A549 (cell line): ENCODE measurements at regions of chr15 and their contacts with region 1.

Region 1: DNA sequence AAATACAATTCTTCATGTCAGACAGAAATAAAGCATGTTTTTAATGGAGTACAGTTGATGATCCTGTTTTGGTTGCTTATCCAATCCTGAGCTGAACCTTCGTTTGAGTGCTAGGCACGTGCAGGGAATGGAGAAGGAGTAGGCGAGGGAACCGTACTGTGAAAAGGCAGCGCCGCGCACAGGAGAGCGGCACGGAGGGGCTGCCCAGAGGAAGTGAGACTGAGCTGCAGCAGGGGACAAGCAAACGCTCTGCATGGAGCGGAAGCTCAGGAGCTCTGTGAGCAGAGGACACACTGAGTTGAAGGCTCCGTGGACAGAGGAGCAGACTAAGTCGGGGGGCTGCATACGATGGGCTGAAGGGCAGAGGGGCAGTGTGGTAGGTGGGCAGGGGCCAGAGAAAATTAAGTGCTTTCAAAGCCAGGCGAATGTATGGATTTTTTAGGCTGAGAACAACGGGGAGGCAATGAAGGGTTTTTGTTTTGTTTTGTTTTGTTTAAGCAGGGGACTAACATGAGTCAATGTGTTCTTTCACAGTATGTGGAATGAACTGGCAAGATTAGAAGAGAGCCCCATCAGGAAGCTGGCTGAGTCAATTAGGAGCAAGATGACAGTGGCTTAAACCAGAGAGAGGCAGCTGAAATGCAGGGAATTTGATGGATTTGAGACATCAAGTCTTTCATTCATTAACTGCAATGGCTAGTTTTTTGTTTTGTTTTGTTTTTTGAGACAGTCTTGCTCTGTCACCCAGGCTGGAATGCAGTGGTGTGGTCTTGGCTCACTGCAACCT is 23.8 kb upstream of the TM2D3 start:
- DNase-seq: peak; percentile 34 to 54
- ATAC-seq: peak; percentile 85; a peak in 5 of 6 replicates
- H3K4me3 ChIP-seq: no peak overlapping the region
- H3K27ac ChIP-seq: peak overlapping the region; percentile 11 to 57; a peak in 3 of 6 replicates
- H3K4me1 ChIP-seq: peaks cover 21% of the 10 kb centered on the region
- CTCF ChIP-seq: no peak
- EP300 ChIP-seq: no peak
- POLR2A ChIP-seq: no peak
- RAD21 ChIP-seq: no peak

Region 2: GRCh38 chr15:101664303-101664913 is 11.6 kb before region 1 on chr15:
- CTCF ChIA-PET with region 1: interaction called, 20 read pairs
- POLR2A ChIA-PET with region 1: no interaction called
- DNase-seq: peak; percentile 54
- ATAC-seq: peak; percentile 90 to 97
- H3K4me3 ChIP-seq: no peak overlapping the region
- H3K27ac ChIP-seq: no peak overlapping the region
- H3K4me1 ChIP-seq: 0 out of 3 replicates have a peak, but pooled peaks cover under 1% of the 10 kb centered on the region
- CTCF ChIP-seq: peak; percentile 65
- EP300 ChIP-seq: no peak
- POLR2A ChIP-seq: no peak
- RAD21 ChIP-seq: peak; percentile 51 to 59; a peak in 4 of 5 replicates

Region 3: DNA sequence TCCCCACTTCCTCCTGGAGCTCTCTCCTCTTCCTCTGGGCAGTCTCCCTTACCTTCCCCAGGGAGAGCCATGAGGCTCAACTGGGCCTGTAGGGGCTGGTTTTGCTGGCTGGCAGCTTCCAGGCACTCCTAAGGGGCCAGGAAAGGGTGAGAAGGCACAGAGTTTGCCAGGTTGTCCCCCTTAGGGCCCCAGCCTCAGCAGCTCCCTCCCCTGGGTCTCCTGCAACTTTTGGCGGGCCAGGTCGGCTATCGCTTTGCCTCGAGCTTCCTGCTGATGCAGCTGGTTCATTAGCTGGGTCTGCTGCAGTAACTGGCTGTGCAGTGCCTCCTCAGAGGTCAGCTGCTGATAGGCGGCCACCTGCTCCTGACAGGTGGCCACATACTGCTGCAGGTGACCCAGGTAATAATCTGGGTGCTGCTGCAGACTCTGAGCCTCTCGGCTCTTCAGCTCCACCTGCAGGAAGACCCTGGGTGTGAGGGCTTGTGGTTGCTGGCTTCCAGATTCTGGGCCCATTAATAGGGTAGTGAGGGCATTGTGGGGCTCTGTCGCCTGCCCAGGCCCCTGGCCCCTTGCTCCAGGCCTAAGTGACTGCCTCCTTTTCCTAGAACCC is 97.6 kb after region 1 on chr15:
- CTCF ChIA-PET with region 1: no interaction called
- POLR2A ChIA-PET with region 1: no interaction called
- DNase-seq: peak in 1 of 2 experiments; percentile 18
- ATAC-seq: 0 out of 6 replicates have a peak, but pooled peaks of 1 of the 2 experiments have one; percentile 13
- H3K4me3 ChIP-seq: no peak overlapping the region
- H3K27ac ChIP-seq: no peak overlapping the region
- H3K4me1 ChIP-seq: no peaks in the 10 kb centered on the region
- CTCF ChIP-seq: no peak; the same call in 2 of the 3 replicates
- EP300 ChIP-seq: no peak
- POLR2A ChIP-seq: no peak
- RAD21 ChIP-seq: peak; percentile 38 to 61; a peak in 4 of 5 replicates